Activated CD4-positive, alpha-beta memory T cell treated with anti-CD3 and anti-CD28 coated beads, Interleukin-2, amount 10 ng/mL, durations not matched to agents 7 days and 5 days (primary cell): ENCODE measurements at regions of chr11 and their contacts with region 1.

Region 1: GRCh38 chr11:93895106-93895862 is 44.9 kb upstream of the VSTM5 start:
- DNase-seq: no peak
- H3K4me3 Mint-ChIP-seq: no peak overlapping the region
- H3K27ac Mint-ChIP-seq: no peak overlapping the region
- H3K4me1 Mint-ChIP-seq: no peaks in the 10 kb centered on the region
- H3K27me3 Mint-ChIP-seq: peaks cover 25% of the 10 kb centered on the region

Region 2: GRCh38 chr11:93908689-93909088 is 13.4 kb after region 1 on chr11:
- CTCF ChIA-PET with region 1: no interaction called
- POLR2A ChIA-PET with region 1: no interaction called
- DNase-seq: no peak
- H3K4me3 Mint-ChIP-seq: no peak overlapping the region
- H3K27ac Mint-ChIP-seq: no peak overlapping the region
- H3K4me1 Mint-ChIP-seq: no peaks in the 10 kb centered on the region
- H3K27me3 Mint-ChIP-seq: peaks cover 6% of the 10 kb centered on the region

Region 3: DNA sequence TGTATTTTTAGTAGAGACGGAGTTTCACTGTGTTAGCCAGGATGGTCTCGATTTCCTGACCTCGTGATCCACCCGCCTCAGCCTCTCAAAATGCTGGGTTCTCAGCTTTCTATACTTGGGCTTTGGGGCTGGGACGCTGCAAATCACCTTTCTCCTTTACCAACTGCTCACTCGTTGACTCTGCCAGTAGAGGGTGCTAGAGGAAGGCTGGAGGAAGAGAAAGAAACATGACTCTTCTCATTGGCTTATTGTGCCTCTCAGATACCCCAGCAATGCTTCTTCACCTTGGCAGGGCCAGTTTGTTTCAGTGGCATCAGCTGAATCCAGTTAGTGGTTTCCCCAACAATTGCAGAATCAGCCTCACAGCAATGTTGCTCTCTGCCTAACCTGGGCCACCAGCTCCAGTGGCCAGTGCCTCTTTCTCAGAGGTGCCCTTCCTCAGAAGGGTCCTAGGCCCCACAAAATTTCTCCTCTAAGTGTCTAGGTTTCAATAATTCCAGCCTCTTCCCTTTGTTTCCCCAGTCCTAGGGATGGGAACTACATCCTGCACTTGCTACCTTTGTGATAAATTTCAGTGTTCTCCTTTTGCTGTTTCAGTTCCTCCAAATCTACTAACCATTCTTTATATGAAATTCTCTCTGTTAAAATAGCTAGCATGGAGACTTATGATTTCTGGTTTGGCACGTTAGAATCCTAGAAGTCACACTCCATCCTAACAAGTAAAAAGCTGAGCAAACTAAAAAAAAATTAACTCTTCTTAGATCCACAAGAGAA is 26.6 kb after region 1 on chr11:
- CTCF ChIA-PET with region 1: interaction called, 10 read pairs
- POLR2A ChIA-PET with region 1: no interaction called
- DNase-seq: peak; percentile 21
- H3K4me3 Mint-ChIP-seq: no peak overlapping the region
- H3K27ac Mint-ChIP-seq: no peak overlapping the region
- H3K4me1 Mint-ChIP-seq: no peaks in the 10 kb centered on the region
- H3K27me3 Mint-ChIP-seq: peaks cover 12% of the 10 kb centered on the region